Right ventricle myocardium inferior (tissue), 1 donor: ENCODE measurements at regions of chr4 and their contacts with region 1.

Region 1: DNA sequence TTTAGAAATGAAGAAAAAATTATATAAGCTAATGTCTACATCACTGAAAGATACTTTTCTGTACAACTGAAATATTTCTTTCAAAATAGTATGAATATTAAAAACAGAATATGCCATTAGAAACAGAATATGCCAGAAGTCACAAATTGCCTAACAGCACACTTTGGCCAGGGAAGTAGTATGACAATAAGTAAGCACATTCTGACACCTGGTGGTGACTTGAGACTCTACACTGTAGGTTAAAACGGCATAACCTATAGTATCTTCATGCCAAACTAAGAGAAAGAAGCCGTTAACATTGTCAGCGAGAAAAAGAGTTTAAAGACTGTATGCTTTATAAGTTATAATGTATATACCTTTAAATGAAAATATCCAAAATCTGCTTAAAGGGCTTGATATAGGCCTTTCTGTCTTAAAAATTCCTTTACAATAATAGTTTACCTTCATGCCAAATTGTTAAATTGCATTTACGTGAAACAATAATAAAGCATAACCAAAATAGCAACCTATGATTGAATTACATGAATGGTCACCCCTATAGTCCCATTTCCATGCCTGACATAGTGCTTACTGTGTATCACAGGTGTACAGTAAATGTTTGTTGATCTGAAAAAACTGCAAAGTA is 32.8 kb downstream of the FAM13A start:
- DNase-seq: no peak
- ATAC-seq: peak; percentile 96

Region 2: GRCh38 chr4:88823058-88823919 is 200.9 kb before region 1 on chr4:
- intact Hi-C with region 1: loop called (anchors 2 kb)
- DNase-seq: peak; percentile 92
- ATAC-seq: peak; percentile 99